ENCODE measurements at regions of chr12 and their contacts with region 1.

Region 1: DNA sequence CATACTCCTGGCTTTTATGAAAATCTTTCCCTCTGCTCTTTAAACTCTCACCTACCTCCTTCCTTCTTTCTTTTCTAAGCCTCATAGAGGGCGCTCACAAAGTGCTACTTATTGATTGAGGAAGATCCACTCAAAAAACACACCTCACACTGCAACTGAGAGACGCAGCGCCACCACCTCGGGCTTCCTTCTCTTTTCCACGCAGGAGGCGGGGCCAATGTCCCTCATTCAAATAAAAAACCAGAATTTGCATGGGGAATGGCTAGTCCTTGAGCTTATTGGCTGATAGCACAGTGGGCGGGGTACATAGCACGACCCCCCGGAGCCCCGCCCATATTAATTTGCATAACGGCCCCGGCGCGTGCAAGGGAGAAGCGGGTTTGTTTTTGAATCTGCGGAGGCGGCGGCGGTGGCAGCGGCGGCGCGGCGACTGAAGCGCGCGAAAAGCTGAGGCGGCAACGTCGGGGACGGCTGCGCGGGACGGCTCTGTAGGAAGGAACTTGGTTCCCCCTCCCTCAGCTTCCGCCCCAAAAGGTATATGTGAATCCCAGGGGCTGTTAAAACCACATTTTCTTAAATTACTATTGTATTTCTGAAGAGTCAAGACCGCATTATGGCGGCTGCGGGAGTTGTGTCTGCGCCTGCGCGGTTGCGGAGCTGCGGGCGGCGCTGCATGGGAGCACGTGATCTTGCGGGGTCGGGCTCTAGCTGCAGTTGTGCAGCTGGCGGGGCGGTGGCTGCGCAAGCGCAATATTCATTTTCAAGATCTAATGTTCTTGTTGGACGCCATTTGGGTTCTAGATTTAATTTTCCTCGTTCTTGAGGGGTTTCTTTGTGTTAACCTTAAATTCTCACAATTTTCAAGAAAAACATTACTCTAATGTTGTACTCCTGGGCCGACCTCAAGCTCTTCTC is at the start of gene ATF7IP:
- DNase-seq: peak; percentile 95
- ATAC-seq: peak; percentile 99
- H3K4me3 Mint-ChIP-seq: peak within 1 kb of the TSS; percentile 99
- H3K27ac Mint-ChIP-seq: peak within 1 kb of the TSS; percentile 99
- H3K4me1 Mint-ChIP-seq: peaks cover 26% of the 10 kb centered on the region
- H3K27me3 Mint-ChIP-seq: no peaks in the 10 kb centered on the region
- CTCF ChIP-seq: no peak
- total RNA-seq, gene ATF7IP: 141 to 169 TPM (median 167 TPM) in 3 replicates

Region 2: DNA sequence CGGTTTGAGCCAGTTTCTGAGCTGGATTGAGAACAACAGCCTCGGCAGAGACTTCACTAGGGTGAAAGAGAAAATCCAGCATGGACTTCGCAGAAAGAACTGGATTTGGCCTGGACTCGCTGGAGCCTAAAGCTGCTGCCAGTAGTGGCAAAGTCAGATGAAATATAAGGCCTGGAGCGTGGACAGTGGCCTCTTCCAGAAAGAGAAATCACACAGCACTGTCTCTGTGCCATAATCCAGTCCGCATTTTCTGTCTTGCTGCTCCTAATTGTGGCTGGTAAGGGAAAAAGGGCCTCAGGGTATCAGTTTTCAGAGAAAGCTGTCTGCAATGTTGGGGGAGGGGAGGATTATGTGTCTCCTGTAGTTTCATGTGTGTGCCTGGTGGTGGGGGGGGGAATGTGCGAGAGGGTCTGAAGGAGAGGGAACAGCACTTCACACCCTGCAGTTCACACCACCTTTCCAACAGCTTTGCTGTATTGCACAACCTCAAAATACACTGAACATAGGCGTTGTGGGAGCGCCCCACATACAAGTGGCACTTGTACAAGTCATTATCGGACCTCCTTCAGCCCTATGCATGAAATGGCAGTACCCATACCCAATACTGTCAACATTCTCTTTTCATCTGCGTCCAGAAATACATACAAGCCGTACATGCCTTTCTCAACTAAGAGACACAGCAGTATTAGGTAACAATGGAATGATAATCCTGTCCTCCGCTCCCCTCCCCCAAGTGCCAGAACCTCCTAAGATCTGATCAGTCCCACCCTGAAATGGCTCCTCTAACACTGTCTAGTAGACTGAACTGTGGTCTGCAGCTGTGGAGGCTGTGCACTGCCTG is 107.6 kb before region 1 on chr12:
- CTCF ChIA-PET with region 1: interaction called, 34 read pairs
- POLR2A ChIA-PET with region 1: interaction called, 103 read pairs
- DNase-seq: peak; percentile 98
- ATAC-seq: peak; percentile 73
- H3K4me3 Mint-ChIP-seq: peak overlapping the region; percentile 39
- H3K27ac Mint-ChIP-seq: peak overlapping the region; percentile 100
- H3K4me1 Mint-ChIP-seq: peaks cover 75% of the 10 kb centered on the region
- H3K27me3 Mint-ChIP-seq: no peaks in the 10 kb centered on the region; the same call in 1 of the 2 replicates
- CTCF ChIP-seq: no peak

Region 3: DNA sequence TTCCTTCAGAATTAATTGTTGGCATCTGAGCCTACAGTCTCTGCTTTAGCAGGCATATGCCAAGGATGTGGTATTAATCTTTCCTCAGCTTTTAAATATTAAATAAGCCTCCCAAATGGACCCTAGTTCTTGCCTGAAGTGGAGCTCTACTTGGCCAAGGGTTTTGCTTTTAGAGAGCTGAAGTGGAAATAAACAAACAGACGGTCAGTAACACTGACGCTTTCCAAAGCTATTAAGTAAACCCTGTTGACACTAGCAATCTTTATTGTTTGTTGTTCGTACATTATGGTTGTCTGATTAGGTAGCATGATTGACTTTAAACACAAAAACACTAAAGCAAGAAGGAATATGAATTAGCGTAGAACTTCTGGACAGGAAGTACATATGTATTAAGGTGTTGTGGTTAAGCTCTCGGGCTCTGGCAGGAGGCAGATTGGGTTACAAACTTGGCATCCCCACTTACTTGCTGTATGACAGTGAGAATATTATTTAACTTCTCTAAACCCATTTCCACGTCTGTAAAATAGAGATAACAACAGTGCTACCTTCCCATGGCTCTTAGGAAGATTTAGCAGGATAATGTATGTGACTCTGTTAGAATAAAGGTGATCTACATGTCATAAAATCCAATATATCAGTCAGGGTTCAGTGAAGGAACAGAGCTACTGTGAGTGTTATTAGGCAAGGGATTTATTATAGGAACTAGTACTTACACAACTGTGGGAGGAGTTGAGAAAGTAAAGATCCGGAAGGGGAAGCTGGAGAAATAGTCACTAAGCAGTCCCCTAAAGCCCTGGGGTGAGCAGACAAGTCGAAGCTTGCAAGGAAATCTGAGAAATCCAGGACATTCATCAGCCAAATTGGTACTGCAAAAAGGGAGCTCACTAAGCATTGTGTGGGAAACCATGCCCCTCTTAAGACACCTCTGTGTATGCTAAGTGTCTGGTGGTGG is 92.3 kb before region 1 on chr12:
- CTCF ChIA-PET with region 1: interaction called, 10 read pairs
- POLR2A ChIA-PET with region 1: interaction called, 8 read pairs
- DNase-seq: no peak
- ATAC-seq: no peak
- H3K4me3 Mint-ChIP-seq: no peak overlapping the region
- H3K27ac Mint-ChIP-seq: no peak overlapping the region
- H3K4me1 Mint-ChIP-seq: peaks cover 25% of the 10 kb centered on the region
- H3K27me3 Mint-ChIP-seq: peaks cover 14% of the 10 kb centered on the region
- CTCF ChIP-seq: no peak

Region 4: GRCh38 chr12:14394317-14395073 is 28.9 kb after region 1 on chr12:
- CTCF ChIA-PET with region 1: interaction called, 3 read pairs
- POLR2A ChIA-PET with region 1: interaction called, 11 read pairs
- DNase-seq: no peak
- ATAC-seq: peak; percentile 94
- H3K4me3 Mint-ChIP-seq: peak overlapping the region; percentile 42
- H3K27ac Mint-ChIP-seq: peak overlapping the region; percentile 97
- H3K4me1 Mint-ChIP-seq: peaks cover 84% of the 10 kb centered on the region
- H3K27me3 Mint-ChIP-seq: no peaks in the 10 kb centered on the region
- CTCF ChIP-seq: no peak

Region 5: GRCh38 chr12:14454098-14454907 is 88.8 kb after region 1 on chr12:
- CTCF ChIA-PET with region 1: interaction called, 21 read pairs
- POLR2A ChIA-PET with region 1: interaction called, 9 read pairs
- DNase-seq: peak; percentile 56
- ATAC-seq: peak; percentile 99
- H3K4me3 Mint-ChIP-seq: no peak overlapping the region
- H3K27ac Mint-ChIP-seq: peak overlapping the region; percentile 86
- H3K4me1 Mint-ChIP-seq: peaks cover 49% of the 10 kb centered on the region
- H3K27me3 Mint-ChIP-seq: no peaks in the 10 kb centered on the region
- CTCF ChIP-seq: peak; percentile 72